ENCODE measurements at regions of chr11 and their contacts with region 1.

Region 1: GRCh38 chr11:77187776-77188632 is 60.0 kb downstream of the MYO7A start:
- DNase-seq: peak; percentile 85
- H3K4me3 Mint-ChIP-seq: no peak overlapping the region
- H3K27ac Mint-ChIP-seq: no peak overlapping the region
- H3K4me1 Mint-ChIP-seq: no peaks in the 10 kb centered on the region
- H3K27me3 Mint-ChIP-seq: peaks cover 21% of the 10 kb centered on the region
- CTCF ChIP-seq: peak; percentile 69

Region 2: DNA sequence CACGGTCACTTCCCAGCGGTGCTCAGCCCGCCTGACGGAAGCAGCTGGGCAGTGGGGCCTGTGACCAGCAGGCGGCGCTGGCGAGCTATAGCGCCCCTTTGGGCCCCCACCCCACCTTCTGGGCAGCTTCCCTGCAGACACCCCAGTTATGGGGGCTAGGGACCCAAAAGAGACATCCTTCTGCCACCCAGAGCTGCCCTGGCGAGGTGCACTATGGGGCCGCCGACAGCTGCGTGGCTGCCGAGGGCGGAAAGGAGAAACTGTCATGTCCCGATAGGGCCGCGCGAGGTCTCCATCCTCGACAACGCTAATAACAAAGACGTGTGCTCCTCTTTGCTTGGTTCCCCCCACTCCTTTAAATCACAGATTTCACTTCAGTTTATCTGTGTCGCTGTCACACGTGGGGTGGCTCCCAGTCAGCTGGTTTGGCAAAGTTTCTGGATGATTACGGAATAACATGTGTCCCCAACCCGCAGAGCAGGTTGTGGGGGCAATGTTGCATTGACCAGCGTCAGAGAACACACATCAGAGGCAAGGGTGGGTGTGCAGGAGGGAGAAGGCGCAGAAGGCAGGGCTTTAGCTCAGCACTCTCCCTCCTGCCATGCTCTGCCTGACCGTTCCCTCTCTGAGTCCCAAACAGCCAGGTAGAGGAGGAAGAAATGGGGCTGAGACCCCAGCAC is 60.6 kb before region 1 on chr11:
- CTCF ChIA-PET with region 1: interaction called, 5 read pairs
- intact Hi-C with region 1: loop called (anchors 1 kb)
- DNase-seq: peak; percentile 67
- H3K4me3 Mint-ChIP-seq: peak overlapping the region; percentile 62
- H3K27ac Mint-ChIP-seq: no peak overlapping the region
- H3K4me1 Mint-ChIP-seq: peaks cover 8% of the 10 kb centered on the region
- H3K27me3 Mint-ChIP-seq: no peaks in the 10 kb centered on the region
- CTCF ChIP-seq: peak; percentile 99

Region 3: GRCh38 chr11:77299528-77299993 is 111.6 kb after region 1 on chr11:
- CTCF ChIA-PET with region 1: no interaction called
- intact Hi-C with region 1: loop called (anchors 10 kb)
- DNase-seq: peak; percentile 79
- H3K4me3 Mint-ChIP-seq: peak overlapping the region; percentile 8
- H3K27ac Mint-ChIP-seq: peak overlapping the region; percentile 94
- H3K4me1 Mint-ChIP-seq: peaks cover 21% of the 10 kb centered on the region
- H3K27me3 Mint-ChIP-seq: no peaks in the 10 kb centered on the region
- CTCF ChIP-seq: no peak

Region 4: DNA sequence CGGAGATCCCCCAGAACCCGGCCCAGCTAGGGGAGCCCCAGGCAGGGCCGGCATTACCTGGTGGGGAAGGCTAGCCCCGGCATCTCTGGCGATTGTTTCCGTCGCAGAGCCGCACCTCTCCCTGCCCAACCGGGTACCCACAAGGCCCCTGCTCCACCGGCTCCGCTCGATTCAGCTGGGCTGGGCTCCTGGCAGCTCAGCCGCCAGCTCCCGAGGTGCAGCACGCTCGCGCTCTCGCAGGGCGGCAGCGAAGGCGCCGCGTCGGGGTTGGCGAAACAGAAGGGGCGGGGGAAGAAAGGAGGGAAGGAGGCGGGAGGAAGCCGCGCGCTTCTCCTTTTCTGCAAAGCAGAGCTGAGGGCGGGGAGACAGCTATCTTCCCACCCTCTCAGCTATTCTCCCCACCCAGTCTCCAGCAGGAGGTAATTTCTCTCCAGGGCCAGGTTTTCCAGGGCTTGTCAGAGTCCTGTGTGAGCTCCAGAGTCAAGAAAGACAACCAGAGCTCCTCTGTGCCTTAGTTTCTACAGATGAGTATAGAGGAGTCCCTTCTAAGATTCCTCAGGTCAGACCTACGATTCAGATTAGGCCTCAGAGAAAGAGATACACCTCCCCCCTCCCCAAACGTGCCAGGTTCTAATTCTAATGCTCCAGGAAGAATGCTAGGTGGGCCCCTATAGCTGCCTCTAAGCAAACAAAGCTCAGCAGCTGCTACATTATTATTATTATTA is 223.9 kb after region 1 on chr11:
- CTCF ChIA-PET with region 1: no interaction called
- intact Hi-C with region 1: loop called (anchors 10 kb)
- DNase-seq: peak; percentile 86
- H3K4me3 Mint-ChIP-seq: peak overlapping the region; percentile 88
- H3K27ac Mint-ChIP-seq: peak overlapping the region; percentile 74
- H3K4me1 Mint-ChIP-seq: peaks cover 52% of the 10 kb centered on the region
- H3K27me3 Mint-ChIP-seq: no peaks in the 10 kb centered on the region
- CTCF ChIP-seq: no peak

Region 5: GRCh38 chr11:77473801-77474683 is 286.0 kb after region 1 on chr11 and contains the start of gene PAK1:
- CTCF ChIA-PET with region 1: no interaction called
- intact Hi-C with region 1: loop called (anchors 5 kb)
- DNase-seq: peak; percentile 92
- H3K4me3 Mint-ChIP-seq: peak within 1 kb of the TSS; percentile 73
- H3K27ac Mint-ChIP-seq: peak within 1 kb of the TSS; percentile 98
- H3K4me1 Mint-ChIP-seq: peaks cover 39% of the 10 kb centered on the region
- H3K27me3 Mint-ChIP-seq: no peaks in the 10 kb centered on the region
- CTCF ChIP-seq: no peak
- total RNA-seq, gene PAK1: 56.3 and 58.5 TPM in 2 replicates